B cell (primary cell): ENCODE measurements at regions of chr11 and their contacts with region 1.

Region 1: GRCh38 chr11:67507864-67508485 is at the start of gene CDK2AP2:
- DNase-seq: peak; percentile 100
- ATAC-seq: peak; percentile 74
- H3K4me3 ChIP-seq: peak within 1 kb of the TSS; percentile 57 to 88 (median 79)
- H3K4me3 Mint-ChIP-seq: peak within 1 kb of the TSS; percentile 92
- H3K27ac ChIP-seq: peak within 1 kb of the TSS; percentile 84 to 98
- H3K27ac Mint-ChIP-seq: peak within 1 kb of the TSS; percentile 95
- H3K4me1 ChIP-seq: peaks cover 39 to 46% of the 10 kb centered on the region in 2 donors
- H3K4me1 Mint-ChIP-seq: peaks cover 42% of the 10 kb centered on the region
- H3K27me3 ChIP-seq: peaks cover 0 to 16% (median 4%) of the 10 kb centered on the region in 4 experiments
- H3K27me3 Mint-ChIP-seq: peaks cover 8% of the 10 kb centered on the region
- CTCF ChIP-seq: no peak
- total RNA-seq, gene CDK2AP2: 50.3 and 62.7 TPM in 2 replicates

Region 2: GRCh38 chr11:67288452-67289225 is 219.3 kb before region 1 on chr11:
- CTCF ChIA-PET with region 1: no interaction called
- POLR2A ChIA-PET with region 1: no interaction called
- intact Hi-C with region 1: loop called (anchors 2 kb)
- DNase-seq: peak; percentile 95
- ATAC-seq: peak; percentile 76
- H3K4me3 ChIP-seq: peak overlapping the region; percentile 31 to 86 (median 79)
- H3K4me3 Mint-ChIP-seq: peak overlapping the region; percentile 76
- H3K27ac ChIP-seq: peak overlapping the region; percentile 86 to 92
- H3K27ac Mint-ChIP-seq: peak overlapping the region; percentile 97
- H3K4me1 ChIP-seq: peaks cover 44 to 55% of the 10 kb centered on the region in 2 donors
- H3K4me1 Mint-ChIP-seq: peaks cover 45% of the 10 kb centered on the region
- H3K27me3 ChIP-seq: no peaks in the 10 kb centered on the region
- H3K27me3 Mint-ChIP-seq: no peaks in the 10 kb centered on the region
- CTCF ChIP-seq: peak; percentile 61

Region 3: GRCh38 chr11:67373925-67374618 is 133.9 kb before region 1 on chr11:
- CTCF ChIA-PET with region 1: no interaction called
- POLR2A ChIA-PET with region 1: no interaction called
- intact Hi-C with region 1: loop called (anchors 1 kb)
- DNase-seq: peak; percentile 77
- ATAC-seq: peak; percentile 35
- H3K4me3 ChIP-seq: peak overlapping the region in 4 of 5 experiments; percentile 48 to 95 (median 76)
- H3K4me3 Mint-ChIP-seq: peak overlapping the region; percentile 94
- H3K27ac ChIP-seq: peak overlapping the region; percentile 41 to 89
- H3K27ac Mint-ChIP-seq: peak overlapping the region; percentile 92
- H3K4me1 ChIP-seq: peaks cover 40 to 47% of the 10 kb centered on the region in 2 donors
- H3K4me1 Mint-ChIP-seq: peaks cover 50% of the 10 kb centered on the region
- H3K27me3 ChIP-seq: no peaks in the 10 kb centered on the region
- H3K27me3 Mint-ChIP-seq: no peaks in the 10 kb centered on the region
- CTCF ChIP-seq: peak; percentile 66

Region 4: DNA sequence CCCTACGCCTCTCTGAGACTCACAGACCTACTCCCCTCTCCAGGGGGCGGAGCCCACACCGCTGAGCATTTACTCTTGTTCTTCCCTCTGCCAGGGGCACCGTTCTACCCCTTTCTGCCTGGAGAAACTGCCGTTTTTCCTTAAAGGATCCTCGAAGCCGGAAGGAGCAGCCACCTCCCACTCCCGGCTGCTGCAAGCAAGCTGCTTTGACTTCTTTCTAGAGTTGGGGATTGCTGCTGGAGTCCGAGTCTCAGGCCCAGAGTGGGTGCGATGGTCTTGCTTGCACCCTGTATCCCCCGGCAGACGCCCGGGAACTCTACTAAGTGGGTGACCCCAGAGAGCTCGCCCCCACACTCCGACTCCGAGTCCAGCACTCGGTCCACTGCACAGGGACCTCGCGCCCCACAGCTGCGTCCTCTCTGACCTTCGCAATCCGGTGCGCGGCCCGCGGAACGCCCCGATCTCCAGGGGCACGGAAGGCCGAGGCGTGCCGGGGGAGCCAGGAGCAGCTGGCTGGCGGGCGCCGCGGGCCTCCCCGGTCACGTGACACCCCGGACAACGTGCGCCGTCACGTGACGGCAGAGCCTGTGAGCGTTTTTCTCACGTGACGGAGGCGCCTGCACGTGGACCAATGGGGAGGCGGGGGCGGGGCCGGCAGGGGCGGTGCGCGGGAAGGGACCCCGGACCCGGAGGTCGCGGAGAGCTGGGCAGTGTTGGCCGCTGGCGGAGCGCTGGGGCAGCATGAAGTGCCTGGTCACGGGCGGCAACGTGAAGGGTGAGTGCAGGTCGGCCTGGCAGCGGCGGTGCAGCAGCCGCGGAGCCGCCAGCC is 116.5 kb before region 1 on chr11 and contains the start of gene RAD9A:
- CTCF ChIA-PET with region 1: interaction called, 11 read pairs
- POLR2A ChIA-PET with region 1: interaction called, 6 read pairs
- intact Hi-C with region 1: loop called (anchors 1 kb)
- DNase-seq: peak; percentile 96
- ATAC-seq: peak; percentile 83
- H3K4me3 ChIP-seq: peak within 1 kb of the TSS; percentile 63 to 95 (median 81)
- H3K4me3 Mint-ChIP-seq: peak within 1 kb of the TSS; percentile 91
- H3K27ac ChIP-seq: peak within 1 kb of the TSS; percentile 33 to 78
- H3K27ac Mint-ChIP-seq: peak within 1 kb of the TSS; percentile 69
- H3K4me1 ChIP-seq: peaks cover 10 to 29% of the 10 kb centered on the region in 2 donors
- H3K4me1 Mint-ChIP-seq: peaks cover 36% of the 10 kb centered on the region
- H3K27me3 ChIP-seq: no peaks in the 10 kb centered on the region
- H3K27me3 Mint-ChIP-seq: no peaks in the 10 kb centered on the region
- CTCF ChIP-seq: no peak
- total RNA-seq, gene RAD9A: 48.3 and 50.6 TPM in 2 replicates

Region 5: GRCh38 chr11:67482825-67483798 is 24.9 kb before region 1 on chr11 and contains the start of gene AIP:
- CTCF ChIA-PET with region 1: interaction called, 11 read pairs
- POLR2A ChIA-PET with region 1: interaction called, 6 read pairs
- intact Hi-C with region 1: loop called (anchors 1 kb)
- DNase-seq: peak; percentile 98
- ATAC-seq: peak; percentile 87
- H3K4me3 ChIP-seq: peak within 1 kb of the TSS; percentile 56 to 99 (median 68)
- H3K4me3 Mint-ChIP-seq: peak within 1 kb of the TSS; percentile 99
- H3K27ac ChIP-seq: peak within 1 kb of the TSS; percentile 75 to 79
- H3K27ac Mint-ChIP-seq: peak within 1 kb of the TSS; percentile 100
- H3K4me1 ChIP-seq: peaks cover 38 to 56% of the 10 kb centered on the region in 2 donors
- H3K4me1 Mint-ChIP-seq: peaks cover 56% of the 10 kb centered on the region
- H3K27me3 ChIP-seq: no peaks in the 10 kb centered on the region
- H3K27me3 Mint-ChIP-seq: no peaks in the 10 kb centered on the region
- CTCF ChIP-seq: no peak
- total RNA-seq, gene AIP: 120 and 127 TPM in 2 replicates

Region 6: GRCh38 chr11:67534070-67534679 is 26.2 kb after region 1 on chr11:
- CTCF ChIA-PET with region 1: no interaction called
- POLR2A ChIA-PET with region 1: no interaction called
- intact Hi-C with region 1: no loop called
- DNase-seq: no peak
- ATAC-seq: no peak
- H3K4me3 ChIP-seq: no peak overlapping the region
- H3K4me3 Mint-ChIP-seq: no peak overlapping the region
- H3K27ac ChIP-seq: no peak overlapping the region
- H3K27ac Mint-ChIP-seq: no peak overlapping the region
- H3K4me1 ChIP-seq: no peaks in the 10 kb centered on the region
- H3K4me1 Mint-ChIP-seq: no peaks in the 10 kb centered on the region
- H3K27me3 ChIP-seq: peaks cover 0 to 5% (median 0%) of the 10 kb centered on the region in 4 experiments
- H3K27me3 Mint-ChIP-seq: peaks cover 9% of the 10 kb centered on the region
- CTCF ChIP-seq: no peak

Region 7: GRCh38 chr11:67606492-67607201 is 98.7 kb after region 1 on chr11 and contains the start of gene NDUFV1:
- CTCF ChIA-PET with region 1: no interaction called
- POLR2A ChIA-PET with region 1: no interaction called
- intact Hi-C with region 1: loop called (anchors 1 kb)
- DNase-seq: peak; percentile 97
- ATAC-seq: peak; percentile 99
- H3K4me3 ChIP-seq: peak within 1 kb of the TSS; percentile 70 to 90 (median 88)
- H3K4me3 Mint-ChIP-seq: peak within 1 kb of the TSS; percentile 95
- H3K27ac ChIP-seq: peak within 1 kb of the TSS; percentile 43 to 72
- H3K27ac Mint-ChIP-seq: peak within 1 kb of the TSS; percentile 90
- H3K4me1 ChIP-seq: peaks cover 13 to 17% of the 10 kb centered on the region in 2 donors
- H3K4me1 Mint-ChIP-seq: peaks cover 20% of the 10 kb centered on the region
- H3K27me3 ChIP-seq: peaks cover 0 to 16% (median 5%) of the 10 kb centered on the region in 4 experiments
- H3K27me3 Mint-ChIP-seq: peaks cover 18% of the 10 kb centered on the region
- CTCF ChIP-seq: peak; percentile 82
- total RNA-seq, gene NDUFV1: 232 and 238 TPM in 2 replicates